ENCODE measurements at regions of chr1 and their contacts with region 1.

Region 1: DNA sequence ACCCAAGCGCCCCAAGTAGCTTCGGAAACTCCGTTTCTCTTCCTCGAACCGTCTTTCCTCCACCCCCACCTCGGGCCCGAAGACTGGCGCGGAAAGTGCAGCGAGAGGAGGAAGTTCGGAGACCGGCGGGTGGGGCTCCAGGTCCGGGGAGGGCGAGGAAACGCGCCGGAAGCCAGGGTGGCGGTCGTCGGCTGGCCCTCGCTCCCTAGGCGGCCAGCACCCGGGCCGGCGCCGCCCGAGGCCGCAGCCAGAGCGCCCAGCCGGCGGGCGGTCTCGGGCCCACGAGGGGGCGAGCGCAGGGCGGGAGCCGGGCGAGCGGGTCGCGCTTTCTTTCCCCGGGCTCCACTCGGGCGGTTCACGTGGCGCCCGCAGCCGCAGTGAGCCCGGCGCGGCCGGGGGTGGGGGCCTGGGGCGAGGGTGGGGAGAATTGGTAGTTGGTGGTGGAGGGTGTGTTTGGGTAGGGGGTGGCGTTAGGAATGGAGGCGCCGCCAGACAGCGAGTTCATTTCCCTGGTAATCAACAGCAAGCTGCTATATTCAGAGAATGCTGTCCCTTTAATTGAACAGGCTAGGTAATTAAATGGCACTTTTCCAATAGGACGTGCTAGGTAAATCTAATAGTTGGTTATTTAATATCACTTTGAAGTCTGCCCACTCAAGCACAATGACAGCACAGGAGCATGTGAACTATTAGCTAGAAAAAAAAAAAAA is 6.7 kb downstream of the LMO4 start:
- DNase-seq: peak; percentile 81
- ATAC-seq: peak; percentile 62 to 65

Region 2: GRCh38 chr1:87243573-87243972 is 91.8 kb before region 1 on chr1:
- intact Hi-C with region 1: no loop called
- DNase-seq: no peak
- ATAC-seq: peak in 1 of 2 donors; percentile 77

Region 3: GRCh38 chr1:87464022-87464490 is 128.7 kb after region 1 on chr1:
- intact Hi-C with region 1: no loop called
- DNase-seq: no peak
- ATAC-seq: peak; percentile 44 to 82

Region 4: GRCh38 chr1:87684194-87684593 is 348.9 kb after region 1 on chr1:
- intact Hi-C with region 1: loop called in 1 of 2 experiments (anchors 10 kb)
- DNase-seq: peak; percentile 23
- ATAC-seq: peak; percentile 62 to 79